Caco-2 (cell line): ENCODE measurements at regions of chr18 and their contacts with region 1.

Region 1: DNA sequence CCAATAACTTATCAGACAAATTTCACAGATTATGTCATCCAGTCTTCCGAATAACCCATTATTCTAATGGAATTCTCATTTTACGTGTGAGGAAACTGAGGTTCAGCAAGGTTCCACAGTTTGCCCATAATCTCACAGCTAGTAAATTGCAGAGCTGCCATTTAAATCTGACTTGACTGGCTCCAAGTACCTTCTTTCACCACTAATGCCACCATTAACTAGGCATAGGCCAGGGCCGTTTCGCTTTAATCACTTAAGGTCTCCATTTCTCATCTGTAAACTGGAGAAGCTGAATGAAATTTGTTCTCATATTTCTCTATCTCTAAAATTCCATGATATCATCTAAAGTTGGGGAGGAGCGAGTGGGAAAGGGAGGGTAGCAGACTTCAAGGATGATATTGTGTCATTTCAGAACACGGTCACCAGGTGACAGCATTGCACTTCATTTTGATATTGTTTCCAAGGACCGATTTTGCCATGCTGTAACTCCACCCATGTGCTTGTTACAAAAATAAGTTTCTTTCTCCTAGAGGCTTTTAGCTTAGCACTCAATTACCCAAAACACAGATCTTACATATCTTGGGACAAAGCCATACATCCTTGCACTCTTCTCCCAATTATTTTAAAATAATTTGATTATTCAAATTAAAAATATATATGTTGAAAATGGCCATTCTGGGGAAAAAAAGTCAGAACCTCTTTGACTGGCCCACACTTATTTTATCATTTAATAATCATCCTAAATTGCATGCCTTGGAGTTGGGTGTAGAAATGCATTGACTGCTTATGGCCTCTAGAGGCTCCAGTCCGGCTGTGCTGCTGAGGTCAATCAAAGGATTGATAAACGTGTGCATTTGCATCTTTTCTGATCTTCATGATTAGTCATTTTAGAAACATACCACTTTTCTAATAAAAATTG is 123.8 kb downstream of the AKAIN1 start:
- DNase-seq: peak; percentile 38 to 52
- H3K4me3 ChIP-seq: no peak overlapping the region
- H3K4me3 Mint-ChIP-seq: no peak overlapping the region
- H3K27ac Mint-ChIP-seq: no peak overlapping the region
- H3K4me1 ChIP-seq: no peaks in the 10 kb centered on the region
- H3K4me1 Mint-ChIP-seq: no peaks in the 10 kb centered on the region
- H3K27me3 ChIP-seq: no peaks in the 10 kb centered on the region
- H3K27me3 Mint-ChIP-seq: peaks cover 8% of the 10 kb centered on the region
- CTCF ChIP-seq: peak; percentile 62 to 82

Region 2: GRCh38 chr18:5106730-5107129 is 33.4 kb after region 1 on chr18:
- CTCF ChIA-PET with region 1: no interaction called
- POLR2A ChIA-PET with region 1: no interaction called
- intact Hi-C with region 1: loop called (anchors 1 kb)
- DNase-seq: no peak
- H3K4me3 ChIP-seq: no peak overlapping the region
- H3K4me3 Mint-ChIP-seq: no peak overlapping the region
- H3K27ac Mint-ChIP-seq: no peak overlapping the region
- H3K4me1 ChIP-seq: no peaks in the 10 kb centered on the region
- H3K4me1 Mint-ChIP-seq: no peaks in the 10 kb centered on the region
- H3K27me3 ChIP-seq: no peaks in the 10 kb centered on the region
- H3K27me3 Mint-ChIP-seq: peaks cover 7% of the 10 kb centered on the region
- CTCF ChIP-seq: peak in 1 of 2 experiments; percentile 54

Region 3: DNA sequence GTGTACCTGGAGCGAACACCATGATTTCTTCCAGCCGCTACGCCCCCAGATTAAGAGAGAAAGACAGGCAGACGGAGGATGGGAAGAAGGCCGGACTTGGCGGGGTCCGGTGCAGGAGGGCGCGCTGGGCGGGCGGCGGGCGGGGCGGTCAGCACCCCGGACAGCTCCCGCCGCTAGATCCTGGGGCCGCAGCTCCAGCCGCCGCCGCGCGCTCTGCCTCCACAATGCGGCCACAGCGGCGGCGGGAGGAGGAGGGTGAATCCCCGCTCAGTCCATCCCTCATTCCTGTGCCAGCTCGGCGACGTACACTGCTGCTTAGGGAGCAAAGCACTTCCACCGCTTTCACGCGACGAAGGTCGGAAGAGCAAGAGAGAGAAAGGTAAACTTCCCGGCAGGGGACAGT is 123.7 kb after region 1 on chr18 and contains the start of gene AKAIN1:
- CTCF ChIA-PET with region 1: no interaction called
- POLR2A ChIA-PET with region 1: no interaction called
- intact Hi-C with region 1: no loop called
- DNase-seq: peak; percentile 43 to 71
- H3K4me3 ChIP-seq: no peak within 1 kb of the TSS
- H3K4me3 Mint-ChIP-seq: peak within 1 kb of the TSS; percentile 66
- H3K27ac Mint-ChIP-seq: no peak within 1 kb of the TSS
- H3K4me1 ChIP-seq: no peaks in the 10 kb centered on the region
- H3K4me1 Mint-ChIP-seq: peaks cover 6% of the 10 kb centered on the region
- H3K27me3 ChIP-seq: no peaks in the 10 kb centered on the region
- H3K27me3 Mint-ChIP-seq: peaks cover 12% of the 10 kb centered on the region
- CTCF ChIP-seq: no peak
- total RNA-seq, gene AKAIN1: not detected in 2 replicates

Region 4: DNA sequence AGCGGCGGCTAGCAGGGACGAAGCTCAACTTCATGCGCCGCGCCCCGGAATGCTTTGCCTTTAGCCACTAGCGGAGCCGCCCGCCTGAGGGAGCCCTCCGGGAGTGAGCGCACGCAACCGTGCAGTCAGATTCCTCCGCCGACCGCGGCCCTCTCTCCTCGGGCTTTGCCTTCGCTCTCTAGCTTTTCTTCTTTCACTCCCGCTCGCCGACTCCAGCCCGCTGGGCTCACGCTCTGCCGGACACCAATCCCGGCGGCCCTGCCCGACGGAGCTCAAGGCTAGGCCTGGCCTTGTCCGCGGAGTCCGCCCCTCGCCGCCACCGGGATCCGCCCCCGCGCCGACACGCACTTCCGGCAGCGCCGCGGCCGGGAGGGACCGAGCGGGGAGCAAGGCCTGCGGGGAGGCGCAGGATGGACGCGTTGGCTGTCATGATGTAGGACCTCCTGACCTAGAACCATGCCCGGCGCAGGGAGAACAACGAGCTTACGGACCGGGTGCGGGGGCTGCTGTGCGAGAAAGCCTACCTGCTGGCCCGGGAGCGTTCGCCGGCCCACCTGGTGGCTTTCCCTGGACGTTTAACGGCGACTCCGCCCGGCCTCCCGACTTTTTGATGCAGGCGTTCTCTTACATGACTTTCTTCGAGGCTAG is 164.6 kb after region 1 on chr18:
- CTCF ChIA-PET with region 1: no interaction called
- POLR2A ChIA-PET with region 1: no interaction called
- intact Hi-C with region 1: loop called (anchors 5 kb)
- DNase-seq: peak; percentile 83 to 93
- H3K4me3 ChIP-seq: peak overlapping the region; percentile 87
- H3K4me3 Mint-ChIP-seq: peak overlapping the region; percentile 93
- H3K27ac Mint-ChIP-seq: peak overlapping the region; percentile 98
- H3K4me1 ChIP-seq: peaks cover 5% of the 10 kb centered on the region; the same call in 1 of the 2 replicates
- H3K4me1 Mint-ChIP-seq: no peaks in the 10 kb centered on the region
- H3K27me3 ChIP-seq: no peaks in the 10 kb centered on the region
- H3K27me3 Mint-ChIP-seq: no peaks in the 10 kb centered on the region
- CTCF ChIP-seq: peak; percentile 45 to 46

Region 5: DNA sequence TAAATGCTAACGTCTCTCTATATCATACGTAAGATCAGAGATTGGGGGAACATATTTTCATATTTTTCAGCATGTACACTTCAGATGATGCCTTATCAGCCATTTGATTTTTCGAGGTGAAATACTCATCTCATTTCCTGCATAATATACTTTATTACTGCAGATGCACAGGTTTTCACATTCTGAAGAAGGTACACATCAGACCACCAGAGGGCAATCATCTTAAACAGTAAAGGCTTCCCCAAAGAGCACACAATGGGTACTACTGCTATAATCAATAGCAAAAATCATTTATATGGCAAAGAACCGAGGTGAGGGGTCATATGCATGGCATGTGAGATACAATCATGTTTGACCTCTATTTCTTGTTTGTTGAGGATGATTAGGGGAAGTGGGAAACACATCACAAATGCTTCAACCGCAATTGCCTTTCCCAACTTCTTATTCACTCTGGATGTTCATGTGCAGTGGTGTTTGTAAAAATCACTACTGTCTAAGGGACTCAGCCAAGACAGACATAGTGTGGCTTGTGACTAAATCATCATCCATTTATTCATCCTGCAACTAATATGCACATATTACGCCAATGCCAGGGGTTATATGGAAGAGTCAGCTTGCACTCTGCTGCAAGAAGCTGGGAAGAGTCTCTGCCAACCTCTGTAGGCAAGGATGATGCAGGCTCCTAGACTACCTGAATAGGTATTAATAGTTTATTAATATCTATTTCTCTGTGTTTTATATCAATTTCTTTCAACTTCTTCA is 351.8 kb after region 1 on chr18:
- CTCF ChIA-PET with region 1: no interaction called
- POLR2A ChIA-PET with region 1: no interaction called
- intact Hi-C with region 1: loop called (anchors 5 kb)
- DNase-seq: peak in 1 of 2 experiments; percentile 10
- H3K4me3 ChIP-seq: no peak overlapping the region
- H3K4me3 Mint-ChIP-seq: no peak overlapping the region
- H3K27ac Mint-ChIP-seq: no peak overlapping the region
- H3K4me1 ChIP-seq: no peaks in the 10 kb centered on the region
- H3K4me1 Mint-ChIP-seq: no peaks in the 10 kb centered on the region
- H3K27me3 ChIP-seq: no peaks in the 10 kb centered on the region
- H3K27me3 Mint-ChIP-seq: peaks cover 5% of the 10 kb centered on the region
- CTCF ChIP-seq: peak; percentile 55 to 58

Region 6: GRCh38 chr18:5546660-5547059 is 473.4 kb after region 1 on chr18:
- CTCF ChIA-PET with region 1: no interaction called
- POLR2A ChIA-PET with region 1: no interaction called
- intact Hi-C with region 1: loop called (anchors 1 kb)
- DNase-seq: peak in 1 of 2 experiments; percentile 13
- H3K4me3 ChIP-seq: no peak overlapping the region
- H3K4me3 Mint-ChIP-seq: no peak overlapping the region
- H3K27ac Mint-ChIP-seq: no peak overlapping the region
- H3K4me1 ChIP-seq: no peaks in the 10 kb centered on the region
- H3K4me1 Mint-ChIP-seq: no peaks in the 10 kb centered on the region
- H3K27me3 ChIP-seq: no peaks in the 10 kb centered on the region
- H3K27me3 Mint-ChIP-seq: peaks cover 15% of the 10 kb centered on the region
- CTCF ChIP-seq: peak in 1 of 2 experiments; percentile 35

Region 7: DNA sequence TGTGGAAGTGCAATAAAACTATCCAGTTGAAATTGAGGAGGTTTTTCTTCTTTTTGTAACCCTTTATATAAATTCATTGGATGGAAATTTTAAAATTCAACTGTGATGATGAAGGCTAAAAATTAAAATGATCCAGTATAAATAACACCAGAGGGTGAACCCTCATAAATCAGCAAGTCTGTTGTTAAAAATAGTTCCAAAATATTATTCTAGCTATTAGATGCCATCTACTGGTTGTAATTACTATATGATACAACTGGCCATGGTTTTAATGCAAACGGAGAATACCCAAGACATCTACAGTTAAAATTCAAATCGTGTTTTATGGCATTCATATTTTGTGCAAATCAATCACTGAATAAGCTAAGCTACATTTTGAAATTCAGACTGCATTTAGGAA is 768.2 kb after region 1 on chr18:
- CTCF ChIA-PET with region 1: no interaction called
- POLR2A ChIA-PET with region 1: no interaction called
- intact Hi-C with region 1: loop called (anchors 5 kb)
- DNase-seq: no peak
- H3K4me3 ChIP-seq: no peak overlapping the region
- H3K4me3 Mint-ChIP-seq: no peak overlapping the region
- H3K27ac Mint-ChIP-seq: no peak overlapping the region
- H3K4me1 ChIP-seq: no peaks in the 10 kb centered on the region
- H3K4me1 Mint-ChIP-seq: no peaks in the 10 kb centered on the region
- H3K27me3 ChIP-seq: no peaks in the 10 kb centered on the region
- H3K27me3 Mint-ChIP-seq: no peaks in the 10 kb centered on the region
- CTCF ChIP-seq: no peak